OCI-LY7 (cell line): ENCODE measurements at regions of chr12 and their contacts with region 1.

Region 1: GRCh38 chr12:123457980-123458783 is at the start of gene SNRNP35:
- DNase-seq: peak; percentile 87
- H3K4me3 ChIP-seq: peak within 1 kb of the TSS; percentile 74
- H3K27ac ChIP-seq: peak within 1 kb of the TSS; percentile 91
- H3K4me1 ChIP-seq: peaks cover 14% of the 10 kb centered on the region
- CTCF ChIP-seq: no peak
- total RNA-seq, gene SNRNP35: 31.3 and 43.7 TPM in 2 replicates

Region 2: GRCh38 chr12:123388177-123388947 is 69.8 kb before region 1 on chr12:
- CTCF ChIA-PET with region 1: no interaction called
- POLR2A ChIA-PET with region 1: interaction called, 4 read pairs
- intact Hi-C with region 1: loop called (anchors 2 kb)
- DNase-seq: peak; percentile 83
- H3K4me3 ChIP-seq: peak overlapping the region; percentile 80
- H3K27ac ChIP-seq: peak overlapping the region; percentile 71
- H3K4me1 ChIP-seq: peaks cover 45% of the 10 kb centered on the region
- CTCF ChIP-seq: no peak

Region 3: GRCh38 chr12:123488539-123489230 is 30.5 kb after region 1 on chr12:
- CTCF ChIA-PET with region 1: no interaction called
- POLR2A ChIA-PET with region 1: no interaction called
- intact Hi-C with region 1: no loop called
- DNase-seq: no peak
- H3K4me3 ChIP-seq: no peak overlapping the region
- H3K27ac ChIP-seq: no peak overlapping the region
- H3K4me1 ChIP-seq: peaks cover 11% of the 10 kb centered on the region
- CTCF ChIP-seq: no peak

Region 4: GRCh38 chr12:123868791-123869190 is 410.6 kb after region 1 on chr12:
- CTCF ChIA-PET with region 1: no interaction called
- POLR2A ChIA-PET with region 1: no interaction called
- intact Hi-C with region 1: no loop called
- DNase-seq: no peak
- H3K4me3 ChIP-seq: no peak overlapping the region
- H3K27ac ChIP-seq: no peak overlapping the region
- H3K4me1 ChIP-seq: no peaks in the 10 kb centered on the region
- CTCF ChIP-seq: no peak